Gastrocnemius medialis (tissue), 4 donors: ENCODE measurements at regions of chr16 and their contacts with region 1.

Region 1: DNA sequence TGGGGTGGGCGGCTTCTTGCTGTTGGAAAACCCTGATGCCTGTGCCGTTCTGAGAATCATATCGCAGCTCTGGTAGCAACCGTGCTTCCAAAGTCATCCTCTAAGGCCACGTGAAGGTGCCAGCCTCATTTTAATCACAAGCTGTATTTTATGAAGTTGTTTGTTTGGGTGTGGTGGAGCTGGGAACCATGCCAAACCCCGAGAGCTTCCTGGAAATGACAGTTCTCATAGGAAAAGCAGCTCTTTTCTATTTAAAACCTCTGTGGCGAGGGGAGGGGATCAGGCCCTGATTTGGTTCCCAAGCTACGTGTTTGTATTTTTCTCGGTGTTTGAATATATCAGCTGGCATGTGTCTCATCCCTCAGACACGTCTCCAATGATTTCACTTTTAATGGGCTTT is 21.7 kb downstream of the KNOP1 start:
- DNase-seq: peak; percentile 55 to 67
- ATAC-seq: peak in 1 of 2 donors; percentile 57
- H3K4me3 ChIP-seq: no peak overlapping the region
- H3K27ac ChIP-seq: peak overlapping the region; percentile 68 to 77 (median 74)
- H3K4me1 ChIP-seq: peaks cover 28 to 54% of the 10 kb centered on the region in 2 donors
- H3K27me3 ChIP-seq: no peaks in the 10 kb centered on the region
- CTCF ChIP-seq: no peak
- POLR2A ChIP-seq: no peak

Region 2: DNA sequence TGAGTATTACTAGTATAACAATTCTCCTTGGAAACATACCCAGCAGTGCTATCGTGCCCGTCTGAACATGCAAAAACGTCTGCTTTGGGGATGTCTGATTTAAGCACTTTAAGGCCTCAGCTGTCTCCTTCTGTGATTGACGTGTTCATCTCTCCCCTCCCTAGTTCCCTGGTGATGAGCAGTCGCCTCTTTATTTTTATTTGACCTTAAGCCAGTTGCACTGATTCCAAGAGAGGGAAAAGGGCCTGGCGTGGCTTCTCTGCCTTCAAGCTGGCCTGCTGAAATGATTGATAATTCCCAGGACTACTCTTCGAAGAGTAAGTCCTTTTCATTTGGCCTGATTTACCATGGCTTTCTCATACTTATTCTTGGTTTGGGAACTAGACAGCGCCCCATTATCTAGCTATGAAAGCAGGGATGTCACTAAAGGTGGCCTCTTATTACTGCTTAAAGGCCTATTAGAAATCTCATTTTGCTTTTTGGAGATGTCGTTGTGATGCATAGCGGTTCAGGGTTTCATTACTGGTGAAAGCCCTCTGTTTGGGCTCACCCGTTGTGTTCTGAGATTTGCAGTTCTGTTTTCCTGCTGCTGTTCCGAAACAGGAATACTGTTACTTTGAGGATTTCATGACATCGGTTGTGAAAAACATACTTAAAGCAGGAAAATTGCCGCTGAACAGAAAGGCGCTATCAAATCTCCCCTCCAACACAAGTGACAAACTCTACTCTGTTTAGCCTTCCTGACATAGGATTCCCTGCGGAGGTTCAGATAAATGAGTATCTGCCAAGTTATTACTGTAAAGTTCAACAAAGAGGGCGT is 87.2 kb after region 1 on chr16:
- in situ Hi-C with region 1: no loop called
- intact Hi-C with region 1: no loop called
- DNase-seq: no peak
- ATAC-seq: peak in 1 of 2 donors; percentile 23
- H3K4me3 ChIP-seq: no peak overlapping the region
- H3K27ac ChIP-seq: peak overlapping the region in 1 of 4 donors; percentile 33
- H3K4me1 ChIP-seq: peaks cover 0 to 13% of the 10 kb centered on the region in 2 donors
- H3K27me3 ChIP-seq: no peaks in the 10 kb centered on the region
- CTCF ChIP-seq: no peak
- POLR2A ChIP-seq: no peak

Region 3: GRCh38 chr16:19879241-19879792 is 183.0 kb after region 1 on chr16:
- in situ Hi-C with region 1: loop called in 3 of 4 experiments (anchors 10 to 25 kb)
- intact Hi-C with region 1: no loop called
- DNase-seq: peak; percentile 63 to 65
- ATAC-seq: peak; percentile 22 to 29
- H3K4me3 ChIP-seq: no peak overlapping the region
- H3K27ac ChIP-seq: peak overlapping the region; percentile 86 to 99 (median 98)
- H3K4me1 ChIP-seq: peaks cover 52 to 82% of the 10 kb centered on the region in 2 donors
- H3K27me3 ChIP-seq: no peaks in the 10 kb centered on the region
- CTCF ChIP-seq: no peak
- POLR2A ChIP-seq: no peak